ENCODE measurements at regions of chr3 and their contacts with region 1.

Region 1: DNA sequence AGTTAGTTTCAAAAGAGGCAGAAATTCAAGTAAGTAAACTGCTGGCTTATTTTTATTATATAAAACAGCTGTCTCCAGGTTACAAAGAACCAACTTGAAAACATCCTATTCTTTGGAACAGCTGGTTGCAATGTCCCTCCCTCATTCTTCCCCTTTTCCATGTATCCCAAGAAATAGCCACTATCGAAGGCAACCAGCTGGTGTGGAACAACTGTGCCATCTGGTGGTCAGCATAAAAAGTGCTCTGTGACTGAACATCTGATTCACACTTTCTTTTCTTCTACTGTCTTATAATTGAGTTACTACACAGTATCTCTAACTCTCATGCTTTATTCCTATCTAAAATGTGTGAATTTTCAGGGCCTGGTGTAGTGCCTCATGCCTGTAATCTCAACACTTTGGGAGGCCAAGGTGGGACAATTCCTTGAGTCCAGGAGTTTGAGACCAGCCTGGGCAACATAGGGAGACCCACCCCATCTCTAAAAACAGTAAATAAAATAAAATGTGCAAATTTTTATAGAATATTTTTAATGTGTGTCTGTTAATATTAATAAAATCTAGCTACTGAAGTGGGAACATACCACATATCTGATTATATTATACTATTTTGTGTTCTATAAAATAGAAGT is 9.6 kb downstream of the OSBPL11 start:
- DNase-seq: peak; percentile 78
- H3K4me3 ChIP-seq: no peak overlapping the region
- H3K27ac ChIP-seq: no peak overlapping the region
- H3K4me1 ChIP-seq: no peaks in the 10 kb centered on the region
- H3K27me3 ChIP-seq: no peaks in the 10 kb centered on the region
- CTCF ChIP-seq: peak; percentile 79 to 81
- POLR2A ChIP-seq: no peak

Region 2: GRCh38 chr3:124928333-124929202 is 657.1 kb before region 1 on chr3:
- CTCF ChIA-PET with region 1: interaction called, 21 read pairs
- POLR2A ChIA-PET with region 1: no interaction called
- dilution Hi-C with region 1: no loop called
- intact Hi-C with region 1: loop called (anchors 1 kb)
- DNase-seq: peak; percentile 74
- H3K4me3 ChIP-seq: no peak overlapping the region
- H3K27ac ChIP-seq: no peak overlapping the region
- H3K4me1 ChIP-seq: no peaks in the 10 kb centered on the region
- H3K27me3 ChIP-seq: peaks cover 0 to 3% of the 10 kb centered on the region in 2 experiments
- CTCF ChIP-seq: peak; percentile 69 to 74
- POLR2A ChIP-seq: no peak

Region 3: DNA sequence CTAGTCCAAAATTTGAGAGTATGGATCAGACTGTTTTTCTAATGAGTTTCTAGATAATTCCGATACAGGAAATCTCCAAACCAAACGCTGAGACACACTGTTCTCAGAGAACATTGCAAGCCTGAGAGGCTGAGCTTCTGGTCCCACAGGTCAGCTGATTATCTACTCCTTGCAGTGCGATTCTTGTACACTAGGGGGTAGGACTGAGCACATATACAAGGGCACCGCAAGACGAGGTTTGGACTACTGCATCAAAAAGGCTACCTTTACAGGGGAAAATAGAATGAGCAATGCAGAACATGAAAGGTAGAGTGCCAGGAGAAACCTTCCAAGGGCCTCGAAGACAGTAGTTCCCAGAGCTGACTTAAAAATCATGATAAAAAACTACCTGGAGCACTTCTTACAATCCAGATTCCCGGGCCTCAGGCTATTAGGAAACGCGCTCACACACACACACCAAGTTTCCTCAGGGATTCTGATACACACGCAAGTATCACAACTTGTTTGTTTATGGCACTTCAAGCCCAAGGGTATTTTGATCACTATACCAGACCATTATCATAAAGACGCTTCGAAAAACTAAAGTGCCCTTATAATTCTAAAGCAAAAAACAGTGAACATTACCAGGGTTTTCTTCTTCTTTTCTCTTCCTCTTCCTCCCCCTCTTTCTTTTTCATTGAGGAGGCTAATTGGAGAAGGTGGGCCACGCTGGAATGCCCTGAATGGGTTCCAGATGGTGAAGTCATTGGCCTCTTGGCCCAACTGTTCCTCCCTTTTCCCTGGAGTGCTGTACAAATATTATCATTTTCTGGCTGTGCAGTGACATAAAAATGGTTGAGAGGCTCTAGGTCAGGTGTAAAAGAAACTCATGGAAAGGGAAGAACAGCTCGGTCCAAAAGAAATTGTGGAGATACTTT is 434.9 kb before region 1 on chr3:
- CTCF ChIA-PET with region 1: no interaction called
- POLR2A ChIA-PET with region 1: no interaction called
- dilution Hi-C with region 1: no loop called
- intact Hi-C with region 1: loop called (anchors 10 kb)
- DNase-seq: peak; percentile 48
- H3K4me3 ChIP-seq: no peak overlapping the region
- H3K27ac ChIP-seq: no peak overlapping the region
- H3K4me1 ChIP-seq: peaks cover 7% of the 10 kb centered on the region
- H3K27me3 ChIP-seq: no peaks in the 10 kb centered on the region
- CTCF ChIP-seq: peak; percentile 37 to 69
- POLR2A ChIP-seq: no peak

Region 4: DNA sequence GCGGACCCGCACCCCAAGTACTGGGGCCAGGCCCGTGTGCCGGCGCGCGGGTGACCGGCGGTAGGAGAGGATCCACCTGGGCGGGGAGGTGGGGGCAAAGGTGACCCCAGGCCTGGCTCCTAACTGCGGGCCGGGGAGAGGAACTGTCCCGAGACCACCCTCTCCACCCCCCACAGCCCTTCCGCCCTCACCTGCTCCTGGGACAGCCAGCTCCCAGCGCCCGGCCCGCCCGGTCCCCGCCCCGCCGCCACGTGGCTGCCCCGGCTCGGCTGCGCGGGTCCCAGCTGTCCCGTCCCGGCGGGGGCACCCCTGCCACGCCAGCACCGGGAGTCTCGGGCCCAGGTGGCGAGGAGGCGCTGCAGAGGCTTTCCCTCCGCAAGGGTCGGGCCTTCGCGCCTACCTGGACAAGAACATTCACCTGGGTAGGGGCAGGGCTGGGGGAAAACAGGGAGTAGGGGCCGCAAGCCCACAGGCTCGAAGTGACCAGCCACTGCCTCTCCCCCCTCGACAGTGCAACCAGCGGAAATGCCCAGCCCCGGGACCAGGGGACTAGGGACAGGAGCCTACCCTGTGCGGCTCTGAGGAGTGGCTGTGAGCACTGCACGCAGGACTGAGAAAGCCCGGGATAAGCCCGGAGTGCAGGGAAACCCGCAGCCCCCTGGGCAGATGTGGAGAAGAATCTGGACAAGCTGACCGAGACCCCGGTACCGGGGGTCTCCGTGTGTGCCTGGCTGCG is 373.0 kb before region 1 on chr3 and contains the start of gene SLC12A8:
- CTCF ChIA-PET with region 1: interaction called, 3 read pairs
- POLR2A ChIA-PET with region 1: no interaction called
- dilution Hi-C with region 1: no loop called
- intact Hi-C with region 1: loop called (anchors 10 kb)
- DNase-seq: no peak
- H3K4me3 ChIP-seq: peak within 1 kb of the TSS; percentile 9 to 42 (median 33)
- H3K27ac ChIP-seq: no peak within 1 kb of the TSS
- H3K4me1 ChIP-seq: peaks cover 7% of the 10 kb centered on the region
- H3K27me3 ChIP-seq: peaks cover 5 to 8% of the 10 kb centered on the region in 2 experiments
- CTCF ChIP-seq: no peak
- POLR2A ChIP-seq: no peak
- total RNA-seq, gene SLC12A8: 0.86 and 0.97 TPM in 2 replicates

Region 5: GRCh38 chr3:125437631-125438435 is 147.9 kb before region 1 on chr3:
- CTCF ChIA-PET with region 1: interaction called, 15 read pairs
- POLR2A ChIA-PET with region 1: no interaction called
- dilution Hi-C with region 1: no loop called
- intact Hi-C with region 1: loop called (anchors 5 kb)
- DNase-seq: peak; percentile 54
- H3K4me3 ChIP-seq: no peak overlapping the region
- H3K27ac ChIP-seq: no peak overlapping the region
- H3K4me1 ChIP-seq: no peaks in the 10 kb centered on the region
- H3K27me3 ChIP-seq: no peaks in the 10 kb centered on the region
- CTCF ChIP-seq: peak; percentile 88 to 89
- POLR2A ChIP-seq: no peak

Region 6: GRCh38 chr3:125496701-125497100 is 89.0 kb before region 1 on chr3:
- CTCF ChIA-PET with region 1: interaction called, 4 read pairs
- POLR2A ChIA-PET with region 1: no interaction called
- dilution Hi-C with region 1: no loop called
- intact Hi-C with region 1: loop called (anchors 10 kb)
- DNase-seq: no peak
- H3K4me3 ChIP-seq: no peak overlapping the region
- H3K27ac ChIP-seq: no peak overlapping the region
- H3K4me1 ChIP-seq: no peaks in the 10 kb centered on the region
- H3K27me3 ChIP-seq: no peaks in the 10 kb centered on the region
- CTCF ChIP-seq: no peak
- POLR2A ChIP-seq: no peak

Region 7: GRCh38 chr3:125519678-125520589 is 65.8 kb before region 1 on chr3 and contains the start of gene SNX4:
- CTCF ChIA-PET with region 1: interaction called, 12 read pairs
- POLR2A ChIA-PET with region 1: no interaction called
- dilution Hi-C with region 1: no loop called
- intact Hi-C with region 1: no loop called
- DNase-seq: peak; percentile 93
- H3K4me3 ChIP-seq: peak within 1 kb of the TSS; percentile 67 to 96 (median 90)
- H3K27ac ChIP-seq: peak within 1 kb of the TSS; percentile 58
- H3K4me1 ChIP-seq: peaks cover 6% of the 10 kb centered on the region
- H3K27me3 ChIP-seq: no peaks in the 10 kb centered on the region
- CTCF ChIP-seq: no peak
- POLR2A ChIP-seq: peak; percentile 57
- total RNA-seq, gene SNX4: 39.2 and 39.7 TPM in 2 replicates